ENCODE measurements at regions of chr10 and their contacts with region 1.

Region 1: GRCh38 chr10:71209352-71209715 is 3.0 kb upstream of the UNC5B start:
- DNase-seq: no peak
- ATAC-seq: no peak

Region 2: GRCh38 chr10:70906953-70907636 is 302.2 kb before region 1 on chr10:
- intact Hi-C with region 1: loop called (anchors 5 kb)
- DNase-seq: peak; percentile 34
- ATAC-seq: peak; percentile 8

Region 3: DNA sequence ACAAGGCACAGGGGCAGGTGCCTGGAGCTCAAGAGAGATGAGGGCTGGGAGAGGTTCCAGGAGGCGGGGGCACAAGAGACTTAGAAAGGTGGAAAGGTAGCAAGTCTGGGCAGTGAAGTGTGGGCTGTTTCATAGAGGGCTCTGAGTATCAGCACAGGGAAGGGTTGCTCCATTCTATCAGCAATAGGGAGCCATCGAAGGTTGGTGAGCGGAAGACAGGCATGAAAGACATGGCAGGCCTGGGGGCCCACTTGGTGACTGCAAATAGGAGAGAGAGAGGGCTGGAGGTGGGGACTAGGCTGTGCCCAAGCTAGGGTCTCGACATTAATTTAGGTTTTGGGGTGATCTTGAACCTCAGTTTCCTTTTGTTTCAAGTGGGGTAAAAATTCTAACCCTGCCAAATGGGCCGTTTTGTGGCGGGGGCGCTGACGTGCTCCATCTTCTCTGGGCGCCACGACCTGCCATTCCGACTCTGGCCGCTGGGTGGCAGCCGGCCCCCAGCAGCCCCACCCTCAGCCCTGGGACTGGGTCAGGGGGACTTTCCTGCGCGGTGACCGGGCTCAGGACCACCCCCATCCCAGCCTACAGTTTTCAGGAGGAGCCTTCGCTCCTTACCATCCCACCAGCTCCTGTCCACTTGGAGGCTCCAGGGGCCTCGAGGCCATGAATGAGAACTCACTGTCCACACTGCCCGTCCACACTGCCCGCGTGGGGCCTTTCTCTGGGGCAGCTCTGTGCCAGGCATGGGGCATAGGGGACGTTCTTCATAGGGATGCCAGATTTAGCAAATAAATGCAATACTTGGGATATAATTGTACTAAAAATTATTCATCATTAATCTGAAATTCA is 283.7 kb before region 1 on chr10:
- intact Hi-C with region 1: loop called (anchors 5 kb)
- DNase-seq: peak; percentile 72
- ATAC-seq: peak; percentile 91

Region 4: DNA sequence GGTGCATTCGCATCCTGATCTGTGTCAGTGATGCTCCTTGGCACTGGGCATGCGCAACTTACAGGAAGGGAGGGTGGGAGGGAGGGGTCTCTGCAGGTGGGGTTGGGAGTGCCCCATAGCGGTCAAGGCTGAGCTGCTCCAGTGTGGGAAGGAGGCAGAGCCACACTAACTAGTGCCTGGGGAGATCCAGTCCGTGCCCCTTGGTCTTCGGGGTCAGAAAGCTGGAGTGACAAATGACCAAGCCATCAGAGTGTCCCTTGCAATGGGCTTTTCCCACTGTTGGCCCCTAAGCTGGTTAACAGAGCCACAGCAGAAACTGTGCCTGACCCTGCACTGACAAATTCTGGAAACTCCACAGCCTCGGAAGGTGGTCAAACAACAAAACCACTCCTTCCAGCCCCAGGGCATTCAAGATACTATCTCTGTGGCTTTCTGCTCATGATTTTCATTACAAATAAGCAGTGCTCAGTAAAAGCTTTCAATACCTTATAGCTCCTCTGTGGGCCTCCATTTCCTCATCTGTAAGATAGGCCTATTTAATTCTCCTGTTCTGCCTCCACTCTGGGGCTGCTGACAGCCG is 135.1 kb before region 1 on chr10:
- intact Hi-C with region 1: loop called (anchors 5 kb)
- DNase-seq: no peak
- ATAC-seq: no peak

Region 5: DNA sequence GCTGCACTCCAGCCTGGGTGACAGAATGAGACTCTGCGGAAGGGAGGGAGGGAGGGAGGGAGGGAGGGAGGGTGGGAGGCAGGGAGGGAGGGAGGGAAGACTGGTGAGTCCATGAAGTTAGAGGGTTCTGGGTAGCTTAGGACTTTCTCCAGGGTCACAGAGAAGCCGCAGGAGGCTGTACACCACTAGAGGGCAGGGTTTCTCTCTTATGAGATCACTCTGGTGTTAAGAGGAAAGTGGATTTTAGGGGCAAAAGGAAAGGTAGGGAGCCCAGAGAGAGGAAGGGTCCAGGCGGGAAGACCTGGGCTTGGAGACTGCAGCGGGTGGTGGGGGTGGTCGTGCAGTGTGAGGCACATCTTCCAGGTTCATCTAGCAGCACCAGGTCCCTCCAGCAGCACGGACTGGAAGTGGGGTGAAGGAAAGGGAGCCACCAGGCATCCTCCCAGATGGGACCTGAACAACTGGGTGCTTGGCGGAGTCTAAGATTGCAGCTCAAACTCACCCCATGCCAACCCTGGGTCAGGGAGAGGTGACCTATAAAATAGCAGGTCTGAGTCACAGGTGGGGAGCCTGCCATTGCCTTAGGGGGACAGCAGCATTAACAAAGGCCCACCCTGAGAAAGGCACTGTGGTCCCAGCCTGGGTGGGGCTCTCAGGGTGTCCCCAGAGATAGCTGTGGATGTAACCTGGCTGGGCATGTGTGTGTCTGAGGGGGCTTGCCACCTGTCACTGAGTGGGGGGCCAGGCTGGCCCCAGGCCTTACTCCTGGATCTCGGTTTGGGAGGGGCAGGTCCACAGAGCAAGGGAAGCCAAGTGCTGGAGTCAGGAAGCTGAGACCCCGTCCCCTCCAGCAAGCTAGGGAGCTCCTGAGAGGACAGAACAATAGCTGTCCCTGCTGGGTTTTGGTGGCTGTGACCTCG is 61.2 kb after region 1 on chr10:
- intact Hi-C with region 1: loop called (anchors 2 kb)
- DNase-seq: peak; percentile 59
- ATAC-seq: peak; percentile 20

Region 6: GRCh38 chr10:71285180-71285545 is 75.8 kb after region 1 on chr10:
- intact Hi-C with region 1: loop called (anchors 5 kb)
- DNase-seq: no peak
- ATAC-seq: peak; percentile 81

Measured in Right ventricle myocardium superior (tissue), 1 donor.